ENCODE measurements at regions of chr2 and their contacts with region 1.

Region 1: DNA sequence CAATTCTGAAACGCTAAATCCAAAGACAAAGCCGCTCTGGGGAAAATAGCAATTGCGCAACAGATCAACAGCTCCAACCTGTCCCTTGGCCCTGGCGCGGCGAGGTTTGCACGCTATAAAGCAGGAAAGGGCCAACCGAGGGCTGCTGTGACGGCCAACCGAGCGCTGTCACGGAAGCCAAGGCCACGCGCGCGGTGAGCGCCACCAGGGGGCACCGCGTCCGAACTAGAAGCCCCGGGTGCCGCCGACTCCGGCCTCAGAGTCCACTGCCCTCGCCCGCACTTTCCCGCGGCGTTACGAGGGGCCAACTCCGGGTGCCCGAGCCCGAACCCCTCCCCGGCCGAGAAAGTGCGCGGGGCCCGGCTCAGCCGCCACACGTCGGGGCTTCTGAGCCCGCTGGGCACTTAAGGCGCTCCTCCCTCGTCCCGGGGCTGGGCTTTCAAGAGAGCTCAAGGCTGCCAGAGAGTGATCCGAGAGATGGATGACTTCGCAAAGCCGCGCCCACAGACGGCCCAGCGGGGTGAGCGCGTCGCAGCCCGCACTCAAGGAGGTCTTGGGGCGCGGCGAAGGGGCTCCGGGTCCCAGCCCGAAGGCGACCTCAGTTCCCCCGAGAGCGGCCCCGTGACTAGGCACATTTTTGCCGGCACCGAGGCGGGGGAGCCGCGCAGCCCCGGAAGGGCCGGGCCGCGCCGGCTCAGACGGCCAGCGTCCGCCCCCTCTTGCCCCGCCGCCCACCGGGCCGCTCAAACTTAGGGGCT is 897 bp downstream of the NFE2L2 start:
- DNase-seq: peak; percentile 92
- H3K4me3 Mint-ChIP-seq: peak overlapping the region; percentile 93
- H3K27ac Mint-ChIP-seq: peak overlapping the region; percentile 98
- H3K4me1 Mint-ChIP-seq: peaks cover 68% of the 10 kb centered on the region
- H3K27me3 Mint-ChIP-seq: no peaks in the 10 kb centered on the region

Region 2: GRCh38 chr2:176931588-176932563 is 331.8 kb before region 1 on chr2:
- intact Hi-C with region 1: loop called (anchors 5 kb)
- DNase-seq: peak; percentile 39
- H3K4me3 Mint-ChIP-seq: peak overlapping the region; percentile 58
- H3K27ac Mint-ChIP-seq: peak overlapping the region; percentile 95
- H3K4me1 Mint-ChIP-seq: peaks cover 36% of the 10 kb centered on the region
- H3K27me3 Mint-ChIP-seq: peaks cover 3% of the 10 kb centered on the region

Region 3: GRCh38 chr2:176947754-176948153 is 315.9 kb before region 1 on chr2:
- intact Hi-C with region 1: no loop called
- DNase-seq: no peak
- H3K4me3 Mint-ChIP-seq: no peak overlapping the region
- H3K27ac Mint-ChIP-seq: no peak overlapping the region
- H3K4me1 Mint-ChIP-seq: no peaks in the 10 kb centered on the region
- H3K27me3 Mint-ChIP-seq: peaks cover 4% of the 10 kb centered on the region

Region 4: DNA sequence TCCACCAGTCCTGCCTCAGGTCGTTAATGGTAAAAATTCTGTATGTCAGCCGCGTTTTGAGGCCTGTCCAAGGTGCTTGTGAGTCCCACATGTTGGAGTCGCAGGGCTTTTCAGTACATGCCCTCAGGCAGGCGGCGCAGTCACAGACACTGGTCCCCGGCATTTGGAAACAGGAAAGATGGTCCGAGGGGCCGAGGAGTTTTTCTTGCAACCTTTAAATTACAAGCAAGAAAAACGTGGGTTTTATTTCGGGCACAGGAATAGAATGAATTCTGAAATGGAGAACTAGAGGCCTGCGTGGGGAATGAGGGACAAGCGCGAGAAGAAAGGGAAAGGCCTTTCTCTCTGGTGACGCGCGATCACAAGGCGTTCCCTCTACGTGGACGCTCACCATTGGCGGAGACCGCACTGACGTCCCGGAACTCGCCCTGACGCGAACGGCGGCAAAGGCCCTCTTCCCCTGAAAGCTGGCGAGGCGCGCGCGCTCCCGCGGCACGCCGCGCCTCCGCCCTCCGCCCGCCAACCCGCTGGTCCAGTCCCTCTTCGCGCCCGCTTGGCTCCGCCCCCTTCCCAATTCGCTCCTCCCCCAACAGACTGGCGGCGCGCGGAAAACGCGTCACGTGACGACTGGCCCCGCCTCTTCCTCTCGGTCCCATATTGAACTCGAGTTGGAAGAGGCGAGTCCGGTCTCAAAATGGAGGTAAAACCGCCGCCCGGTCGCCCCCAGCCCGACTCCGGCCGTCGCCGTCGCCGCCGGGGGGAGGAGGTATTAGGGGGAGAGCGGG is 51.3 kb before region 1 on chr2 and contains the start of gene HNRNPA3:
- intact Hi-C with region 1: loop called (anchors 1 kb)
- DNase-seq: peak; percentile 100
- H3K4me3 Mint-ChIP-seq: peak within 1 kb of the TSS; percentile 97
- H3K27ac Mint-ChIP-seq: peak within 1 kb of the TSS; percentile 99
- H3K4me1 Mint-ChIP-seq: peaks cover 58% of the 10 kb centered on the region
- H3K27me3 Mint-ChIP-seq: no peaks in the 10 kb centered on the region
- total RNA-seq, gene HNRNPA3: 326 and 333 TPM in 2 replicates

Region 5: DNA sequence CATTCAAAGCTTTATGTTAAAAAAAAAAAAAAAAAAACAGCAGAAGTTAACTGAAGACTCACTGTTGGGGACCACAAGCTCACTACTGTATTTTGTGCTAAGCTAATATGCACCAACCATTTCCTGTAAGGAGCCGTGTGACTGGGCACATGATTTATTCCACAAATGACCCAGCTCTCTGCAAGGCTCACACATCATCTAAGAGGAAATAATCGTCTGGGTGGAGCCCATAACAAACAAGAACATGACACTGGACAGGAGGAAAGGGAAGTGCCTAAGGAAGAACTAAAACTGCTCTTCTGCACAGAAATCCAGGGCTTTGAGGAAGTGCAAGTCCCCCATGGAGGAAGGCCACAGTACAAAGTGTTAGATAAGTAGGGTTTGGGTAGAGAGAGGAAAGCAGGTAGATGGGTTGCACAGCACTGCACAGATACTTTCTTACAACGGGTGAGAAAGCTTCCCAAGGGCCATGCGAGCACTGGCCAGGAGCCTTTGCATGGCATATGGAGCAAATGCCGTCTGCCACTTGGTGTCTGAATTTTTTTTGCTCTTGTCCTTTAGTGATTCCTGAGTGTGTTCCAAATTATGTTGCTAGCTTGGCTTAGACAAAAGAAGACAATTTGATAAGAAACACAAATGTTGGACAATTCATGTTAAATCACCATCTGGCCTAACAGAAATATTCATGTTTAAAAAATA is 23.5 kb before region 1 on chr2:
- intact Hi-C with region 1: loop called (anchors 1 kb)
- DNase-seq: no peak
- H3K4me3 Mint-ChIP-seq: peak overlapping the region; percentile 56
- H3K27ac Mint-ChIP-seq: peak overlapping the region; percentile 85
- H3K4me1 Mint-ChIP-seq: peaks cover 74% of the 10 kb centered on the region
- H3K27me3 Mint-ChIP-seq: no peaks in the 10 kb centered on the region

Region 6: DNA sequence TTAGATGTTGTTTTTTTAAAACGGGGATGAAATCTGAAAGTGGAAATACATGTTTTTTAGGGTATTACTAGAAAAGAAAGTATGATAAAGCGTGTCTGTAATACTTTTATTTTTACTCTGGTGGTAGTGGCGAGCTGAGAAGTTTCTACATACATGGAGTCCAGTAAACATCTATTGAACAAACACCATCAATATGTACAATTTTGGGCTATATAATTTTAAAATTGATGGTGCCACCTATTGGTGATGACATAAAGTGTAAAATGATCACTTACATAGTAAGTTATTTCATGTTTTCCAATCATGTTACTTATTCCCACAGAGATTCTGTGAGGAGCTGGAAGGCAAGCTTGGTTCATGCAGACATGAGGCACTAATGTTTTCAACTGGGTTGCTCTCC is 32.4 kb after region 1 on chr2:
- intact Hi-C with region 1: loop called (anchors 1 kb)
- DNase-seq: no peak
- H3K4me3 Mint-ChIP-seq: no peak overlapping the region
- H3K27ac Mint-ChIP-seq: peak overlapping the region; percentile 1
- H3K4me1 Mint-ChIP-seq: peaks cover 47% of the 10 kb centered on the region
- H3K27me3 Mint-ChIP-seq: peaks cover 2% of the 10 kb centered on the region

Region 7: GRCh38 chr2:177338177-177338721 is 74.6 kb after region 1 on chr2:
- intact Hi-C with region 1: no loop called
- DNase-seq: no peak
- H3K4me3 Mint-ChIP-seq: no peak overlapping the region
- H3K27ac Mint-ChIP-seq: no peak overlapping the region
- H3K4me1 Mint-ChIP-seq: peaks cover 6% of the 10 kb centered on the region
- H3K27me3 Mint-ChIP-seq: no peaks in the 10 kb centered on the region

Region 8: GRCh38 chr2:177419274-177419673 is 155.6 kb after region 1 on chr2:
- intact Hi-C with region 1: loop called (anchors 2 kb)
- DNase-seq: no peak
- H3K4me3 Mint-ChIP-seq: no peak overlapping the region
- H3K27ac Mint-ChIP-seq: no peak overlapping the region
- H3K4me1 Mint-ChIP-seq: peaks cover 20% of the 10 kb centered on the region
- H3K27me3 Mint-ChIP-seq: no peaks in the 10 kb centered on the region

Region 9: DNA sequence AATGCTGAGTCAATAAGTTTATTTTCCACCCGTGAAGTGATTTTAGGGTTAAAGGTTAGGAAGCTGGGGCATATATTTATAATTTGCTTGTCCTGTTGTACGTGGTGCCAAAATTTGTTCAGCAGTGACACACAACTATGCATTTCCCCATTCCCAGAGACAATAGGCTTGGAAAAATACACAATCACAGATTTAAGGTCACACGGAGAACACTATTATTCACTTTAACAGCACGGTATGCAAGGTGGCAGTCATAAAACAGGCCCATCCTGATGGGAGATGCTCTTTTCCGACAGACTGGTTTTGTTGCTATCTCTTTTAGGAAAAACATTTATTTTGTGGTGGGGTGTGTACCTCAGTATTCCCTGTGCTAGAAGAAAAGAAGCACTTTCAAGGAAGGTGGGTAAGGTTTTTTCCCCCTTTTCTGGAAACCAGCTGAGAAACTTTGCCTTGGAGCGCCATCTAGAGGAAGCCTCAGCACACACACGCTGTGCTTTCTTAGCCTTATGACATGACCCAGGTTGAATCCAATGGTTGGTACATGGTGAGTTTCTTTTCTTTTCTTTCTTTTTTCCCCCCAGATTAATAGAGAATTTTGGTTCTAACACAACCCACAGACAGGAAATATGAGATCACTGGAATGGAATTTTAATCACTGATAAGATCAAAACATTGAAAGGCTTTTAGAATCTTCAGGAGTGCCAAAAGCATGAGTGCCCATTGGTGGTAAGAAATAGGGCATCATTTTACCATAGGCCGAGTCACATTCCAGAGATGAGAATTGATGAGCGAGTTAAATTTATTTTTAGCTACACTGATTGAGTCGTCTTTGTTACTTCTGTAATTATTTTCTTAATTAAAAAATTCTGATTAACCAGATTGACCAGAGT is 461.0 kb after region 1 on chr2:
- intact Hi-C with region 1: loop called (anchors 10 kb)
- DNase-seq: peak; percentile 16
- H3K4me3 Mint-ChIP-seq: no peak overlapping the region
- H3K27ac Mint-ChIP-seq: no peak overlapping the region
- H3K4me1 Mint-ChIP-seq: no peaks in the 10 kb centered on the region
- H3K27me3 Mint-ChIP-seq: peaks cover 24% of the 10 kb centered on the region